Activated CD4-positive, alpha-beta T cell treated with anti-CD3 and anti-CD28 coated beads, Interleukin-2, amount 10 ng/mL, durations not matched to agents 24 days and 14 days (primary cell): ENCODE measurements at regions of chr11 and their contacts with region 1.

Region 1: DNA sequence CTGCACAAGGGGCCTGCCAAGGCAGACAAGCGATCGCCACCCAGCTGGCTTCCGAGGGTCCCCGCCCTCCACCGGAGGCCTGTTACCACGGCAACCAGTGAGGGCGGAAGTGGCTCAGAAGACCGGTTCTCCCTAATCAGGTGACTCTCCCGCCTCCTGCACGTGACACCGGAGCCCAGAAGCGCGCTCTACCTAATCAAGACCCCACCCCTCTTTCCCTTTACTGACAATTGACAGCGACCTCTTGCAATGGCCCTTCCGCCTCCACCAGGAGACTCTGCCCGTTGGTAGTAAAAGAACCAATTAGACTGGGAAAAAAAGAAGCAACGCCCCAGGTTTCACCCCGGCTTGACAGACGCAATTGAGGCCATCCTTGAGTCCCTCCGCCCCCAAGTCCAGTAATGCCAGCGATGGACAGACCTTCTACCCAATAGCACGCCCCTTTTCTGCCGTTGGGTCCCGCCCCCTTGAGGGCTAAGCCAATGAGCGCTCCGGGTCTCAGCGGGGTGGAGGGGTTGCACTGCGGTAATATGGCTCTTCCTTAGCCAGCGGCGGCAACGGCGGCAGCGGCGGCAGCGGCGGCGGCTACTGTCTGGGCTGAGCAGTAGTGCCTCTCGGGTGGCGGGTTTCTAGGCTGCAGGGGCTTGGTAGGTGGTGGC is at the start of gene UVRAG:
- DNase-seq: peak; percentile 100
- H3K4me3 Mint-ChIP-seq: no peak within 1 kb of the TSS
- H3K27ac Mint-ChIP-seq: peak within 1 kb of the TSS; percentile 94
- H3K4me1 Mint-ChIP-seq: peaks cover 12% of the 10 kb centered on the region
- H3K27me3 Mint-ChIP-seq: no peaks in the 10 kb centered on the region
- total RNA-seq, gene UVRAG: 18.2 and 19.2 TPM in 2 replicates

Region 2: DNA sequence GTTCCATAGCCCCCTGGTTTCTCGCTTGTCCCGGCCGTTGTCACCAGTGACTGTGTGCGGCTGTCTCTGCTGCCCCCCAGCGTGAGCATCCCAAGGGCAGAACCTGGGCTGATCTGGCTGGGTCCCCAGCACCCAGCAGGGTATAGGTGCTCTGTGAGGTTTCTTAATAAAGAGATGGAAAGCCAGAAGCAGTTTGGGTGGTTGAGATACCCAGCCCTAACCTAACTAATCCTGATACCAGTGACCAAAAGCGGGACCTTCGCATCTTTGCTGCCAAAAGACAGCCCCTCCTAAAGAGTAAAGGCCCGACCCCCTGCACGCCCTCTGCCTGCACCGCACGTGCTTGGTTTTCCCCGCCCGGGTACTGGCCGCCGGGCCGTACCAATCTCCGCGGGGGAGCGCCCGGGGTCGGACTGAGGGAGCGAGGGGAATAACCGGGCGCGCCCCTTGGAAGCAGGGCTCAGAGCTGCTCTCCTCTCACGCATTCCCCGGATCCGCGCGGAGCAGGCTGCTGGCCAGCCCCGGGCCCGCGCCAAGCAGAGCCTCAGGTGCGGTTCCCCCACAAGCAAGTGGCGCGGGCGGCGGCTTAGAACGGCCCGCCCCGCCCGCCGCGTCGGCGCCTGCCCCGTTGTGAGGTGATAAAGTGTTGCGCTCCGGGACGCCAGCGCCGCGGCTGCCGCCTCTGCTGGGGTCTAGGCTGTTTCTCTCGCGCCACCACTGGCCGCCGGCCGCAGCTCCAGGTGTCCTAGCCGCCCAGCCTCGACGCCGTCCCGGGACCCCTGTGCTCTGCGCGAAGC is 46.5 kb before region 1 on chr11 and contains the start of gene DGAT2:
- intact Hi-C with region 1: loop called (anchors 1 kb)
- DNase-seq: peak; percentile 92
- H3K4me3 Mint-ChIP-seq: peak within 1 kb of the TSS; percentile 84
- H3K27ac Mint-ChIP-seq: peak within 1 kb of the TSS; percentile 83
- H3K4me1 Mint-ChIP-seq: peaks cover 36% of the 10 kb centered on the region
- H3K27me3 Mint-ChIP-seq: peaks cover 26% of the 10 kb centered on the region
- total RNA-seq, gene DGAT2: 7.3 and 8.6 TPM in 2 replicates

Region 3: GRCh38 chr11:75850787-75851186 is 36.0 kb after region 1 on chr11:
- intact Hi-C with region 1: no loop called
- DNase-seq: no peak
- H3K4me3 Mint-ChIP-seq: no peak overlapping the region
- H3K27ac Mint-ChIP-seq: no peak overlapping the region
- H3K4me1 Mint-ChIP-seq: peaks cover 10% of the 10 kb centered on the region
- H3K27me3 Mint-ChIP-seq: no peaks in the 10 kb centered on the region

Region 4: GRCh38 chr11:75867775-75868374 is 53.1 kb after region 1 on chr11:
- intact Hi-C with region 1: loop called (anchors 5 kb)
- DNase-seq: peak; percentile 84
- H3K4me3 Mint-ChIP-seq: no peak overlapping the region
- H3K27ac Mint-ChIP-seq: no peak overlapping the region
- H3K4me1 Mint-ChIP-seq: peaks cover 5% of the 10 kb centered on the region
- H3K27me3 Mint-ChIP-seq: no peaks in the 10 kb centered on the region

Region 5: GRCh38 chr11:76235233-76236091 is 420.6 kb after region 1 on chr11:
- intact Hi-C with region 1: loop called (anchors 5 kb)
- DNase-seq: peak; percentile 98
- H3K4me3 Mint-ChIP-seq: peak overlapping the region; percentile 96
- H3K27ac Mint-ChIP-seq: peak overlapping the region; percentile 96
- H3K4me1 Mint-ChIP-seq: peaks cover 48% of the 10 kb centered on the region
- H3K27me3 Mint-ChIP-seq: peaks cover 13% of the 10 kb centered on the region